PC-9 (cell line): ENCODE measurements at regions of chr13 and their contacts with region 1.

Region 1: DNA sequence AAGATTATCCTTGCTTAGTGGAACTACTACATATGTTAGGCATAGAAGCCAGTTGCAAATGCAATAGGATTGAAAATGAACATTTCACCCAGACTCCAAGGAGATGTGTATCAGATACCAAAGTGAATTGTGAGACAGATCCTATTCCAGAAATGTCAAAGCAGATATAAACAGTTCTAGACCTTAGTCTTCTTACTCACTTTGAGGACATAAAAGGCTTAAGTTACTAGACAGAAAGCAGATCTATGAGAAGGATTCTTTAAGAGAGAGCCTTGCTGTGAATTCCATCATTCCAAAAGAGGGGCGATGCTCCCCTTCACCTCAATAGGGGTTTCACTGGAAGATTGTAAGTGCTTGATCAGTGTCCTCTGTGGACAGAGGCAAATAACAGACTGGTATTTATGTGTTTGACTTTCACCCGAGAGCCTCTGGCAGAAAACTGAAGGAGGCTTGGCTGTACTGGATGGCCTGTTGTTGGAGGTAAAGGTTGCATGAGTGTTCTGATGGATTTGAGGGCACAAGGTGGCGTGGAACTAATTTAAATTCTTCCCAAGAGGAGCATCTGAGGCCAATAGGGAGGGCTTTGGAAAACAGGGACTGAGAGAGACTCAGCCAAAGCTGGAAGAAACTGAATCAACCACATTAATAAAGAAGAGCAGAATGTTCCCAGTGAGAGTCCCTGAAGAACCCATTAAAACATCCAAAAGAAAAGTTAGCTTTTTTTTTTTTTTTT is 194.8 kb downstream of the DCLK1 start:
- DNase-seq: no peak
- H3K4me3 ChIP-seq: no peak overlapping the region
- H3K27ac ChIP-seq: no peak overlapping the region
- H3K4me1 ChIP-seq: no peaks in the 10 kb centered on the region
- H3K27me3 ChIP-seq: no peaks in the 10 kb centered on the region
- CTCF ChIP-seq: no peak

Region 2: DNA sequence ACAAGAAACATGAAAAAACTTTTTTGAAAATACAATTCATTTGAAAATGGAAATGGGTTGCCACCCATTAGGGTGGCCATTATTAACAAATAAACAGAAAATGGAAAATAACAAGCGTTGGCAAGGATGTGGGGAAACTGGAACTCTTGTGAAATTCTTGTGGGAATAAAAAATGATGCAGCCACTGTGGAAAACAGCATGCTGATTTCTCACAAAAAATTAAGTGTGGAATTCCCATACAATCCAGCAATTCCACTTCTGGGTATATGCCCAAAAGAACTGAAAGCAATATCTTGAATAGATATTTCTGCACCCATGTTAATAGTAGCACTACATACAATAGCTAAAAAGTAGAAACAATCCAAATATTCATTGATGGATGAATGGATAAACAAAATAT is 29.6 kb after region 1 on chr13:
- CTCF ChIA-PET with region 1: interaction called, 15 read pairs
- POLR2A ChIA-PET with region 1: no interaction called
- intact Hi-C with region 1: no loop called
- DNase-seq: no peak
- H3K4me3 ChIP-seq: no peak overlapping the region
- H3K27ac ChIP-seq: no peak overlapping the region
- H3K4me1 ChIP-seq: peaks cover 8% of the 10 kb centered on the region; the same call in 1 of the 2 replicates
- H3K27me3 ChIP-seq: no peaks in the 10 kb centered on the region
- CTCF ChIP-seq: no peak